ENCODE measurements at regions of chr6 and their contacts with region 1.

Region 1: GRCh38 chr6:111483736-111484632 is 966 bp upstream of the REV3L start:
- DNase-seq: peak; percentile 96
- H3K4me3 Mint-ChIP-seq: peak overlapping the region; percentile 89
- H3K27ac Mint-ChIP-seq: peak overlapping the region; percentile 95
- H3K4me1 Mint-ChIP-seq: peaks cover 21% of the 10 kb centered on the region
- H3K27me3 Mint-ChIP-seq: no peaks in the 10 kb centered on the region
- CTCF ChIP-seq: no peak

Region 2: DNA sequence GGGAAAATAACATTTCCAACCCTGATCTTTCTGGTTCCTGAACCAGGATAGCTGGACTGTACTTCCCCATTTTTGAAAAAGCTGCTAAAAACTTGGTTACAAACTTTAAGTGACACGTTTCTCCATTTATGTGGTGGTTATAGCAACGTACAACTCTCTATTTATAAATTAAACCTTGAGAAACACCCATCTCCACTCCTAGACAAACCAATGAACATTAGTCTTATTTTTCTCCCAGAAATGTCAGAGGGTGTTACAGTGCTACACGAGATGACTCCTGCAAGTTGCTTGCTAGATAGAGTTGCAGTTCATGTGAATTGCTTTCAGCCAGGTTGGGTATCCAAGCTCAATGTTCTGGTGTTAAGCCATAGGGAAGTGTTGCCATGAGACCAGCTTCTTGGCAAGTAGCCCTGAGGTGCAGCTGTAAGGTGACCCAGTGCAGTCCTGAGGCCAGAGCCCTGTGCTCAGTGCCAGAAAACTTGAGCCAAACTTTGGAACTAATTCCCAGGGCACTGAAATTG is 50.3 kb after region 1 on chr6:
- CTCF ChIA-PET with region 1: no interaction called
- POLR2A ChIA-PET with region 1: interaction called, 21 read pairs
- intact Hi-C with region 1: no loop called
- DNase-seq: peak; percentile 83
- H3K4me3 Mint-ChIP-seq: no peak overlapping the region
- H3K27ac Mint-ChIP-seq: no peak overlapping the region
- H3K4me1 Mint-ChIP-seq: no peaks in the 10 kb centered on the region
- H3K27me3 Mint-ChIP-seq: no peaks in the 10 kb centered on the region
- CTCF ChIP-seq: no peak

Region 3: DNA sequence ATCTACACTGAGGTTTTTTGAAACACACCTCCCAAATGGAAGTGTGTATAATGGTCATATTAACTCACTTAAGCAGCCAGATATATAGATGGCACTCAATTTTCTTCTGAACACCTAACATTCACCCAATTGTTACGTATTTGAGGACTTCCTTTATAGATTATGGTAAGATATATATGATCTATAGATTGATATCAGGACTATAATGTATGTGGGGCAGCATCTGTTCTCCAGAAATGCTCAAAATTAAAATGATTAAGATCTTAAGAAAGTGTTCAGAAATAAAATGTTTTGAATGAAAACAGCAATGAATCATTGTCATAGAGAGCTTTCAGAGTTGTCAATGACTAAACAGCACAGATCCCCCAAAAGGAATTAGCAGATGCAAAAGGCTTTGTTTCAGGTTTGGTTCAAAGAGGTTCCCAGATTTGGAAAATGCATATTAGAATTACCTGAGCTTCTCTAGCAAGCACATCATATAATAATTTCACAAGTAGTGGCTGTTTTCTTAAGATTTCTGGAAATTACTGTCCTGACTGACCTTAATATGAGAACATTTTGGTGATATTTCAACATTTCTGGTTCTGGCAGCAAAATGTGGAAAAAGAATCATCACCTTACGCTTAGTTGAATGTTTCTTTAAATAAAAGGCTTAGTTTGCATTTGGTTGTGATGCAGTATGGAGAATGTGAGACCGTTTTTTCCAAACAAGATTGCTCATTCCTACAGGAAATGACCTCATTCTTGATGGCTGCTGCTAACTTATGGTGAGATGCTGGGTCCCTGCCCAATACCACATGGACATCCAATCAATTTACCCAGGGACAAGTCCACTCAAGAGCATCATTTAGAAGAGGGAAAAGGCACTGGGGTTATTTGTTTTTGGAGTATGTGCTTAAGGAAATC is 90.2 kb after region 1 on chr6:
- CTCF ChIA-PET with region 1: interaction called, 3 read pairs
- POLR2A ChIA-PET with region 1: interaction called, 29 read pairs
- intact Hi-C with region 1: loop called (anchors 5 kb)
- DNase-seq: peak; percentile 61
- H3K4me3 Mint-ChIP-seq: no peak overlapping the region
- H3K27ac Mint-ChIP-seq: peak overlapping the region; percentile 65
- H3K4me1 Mint-ChIP-seq: peaks cover 22% of the 10 kb centered on the region
- H3K27me3 Mint-ChIP-seq: no peaks in the 10 kb centered on the region
- CTCF ChIP-seq: no peak

Region 4: GRCh38 chr6:111605100-111605751 is 121.2 kb after region 1 on chr6:
- CTCF ChIA-PET with region 1: interaction called, 6 read pairs
- POLR2A ChIA-PET with region 1: interaction called, 145 read pairs
- intact Hi-C with region 1: loop called (anchors 1 kb)
- DNase-seq: peak; percentile 88
- H3K4me3 Mint-ChIP-seq: peak overlapping the region; percentile 90
- H3K27ac Mint-ChIP-seq: peak overlapping the region; percentile 72
- H3K4me1 Mint-ChIP-seq: peaks cover 40% of the 10 kb centered on the region
- H3K27me3 Mint-ChIP-seq: no peaks in the 10 kb centered on the region
- CTCF ChIP-seq: no peak

Measured in MCF 10A (cell line).